ENCODE measurements at regions of chr10 and their contacts with region 1.

Region 1: DNA sequence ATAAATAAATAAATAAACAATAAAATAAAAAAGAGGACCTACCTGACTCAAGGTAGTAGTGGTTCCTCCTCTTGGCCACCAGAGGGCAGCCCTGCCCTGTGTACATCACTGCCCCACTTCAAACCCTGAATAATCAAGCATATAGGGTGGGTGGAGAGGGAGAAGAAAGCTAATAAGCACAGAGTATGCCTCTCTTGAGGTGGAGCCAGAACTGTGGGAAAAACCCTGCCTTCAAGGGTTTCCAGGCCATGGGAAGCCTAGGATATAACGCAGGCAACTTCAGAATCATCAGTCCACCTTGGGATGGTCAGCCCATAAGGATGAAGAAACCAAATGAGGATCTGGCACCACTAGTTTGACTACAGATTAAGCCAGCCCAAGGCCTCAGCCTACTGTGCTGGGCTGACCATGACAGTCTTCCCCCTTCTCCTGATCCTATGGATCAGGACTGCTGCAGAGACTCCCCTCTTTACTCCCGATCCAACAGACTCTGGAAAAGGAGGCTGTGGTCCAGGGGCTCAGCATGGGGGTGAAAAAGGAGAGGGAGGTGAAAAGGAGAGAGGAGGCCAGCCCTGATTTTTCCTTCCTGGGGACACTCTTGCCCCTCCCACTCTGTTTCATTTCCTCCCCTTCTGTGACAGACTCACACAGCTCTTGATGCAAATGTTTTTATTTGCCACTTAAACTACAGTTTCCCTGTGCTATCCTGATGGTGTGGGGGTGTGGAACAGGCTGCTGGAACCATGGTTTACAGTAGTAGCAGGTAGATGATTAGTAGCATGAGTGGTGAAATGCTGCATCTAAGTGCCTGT is 10.1 kb downstream of the AVPI1 start:
- DNase-seq: no peak
- ATAC-seq: peak; percentile 89
- H3K4me3 Mint-ChIP-seq: no peak overlapping the region
- H3K27ac Mint-ChIP-seq: peak overlapping the region; percentile 50
- H3K4me1 Mint-ChIP-seq: peaks cover 13% of the 10 kb centered on the region
- H3K27me3 Mint-ChIP-seq: no peaks in the 10 kb centered on the region
- CTCF ChIP-seq: peak; percentile 83

Region 2: DNA sequence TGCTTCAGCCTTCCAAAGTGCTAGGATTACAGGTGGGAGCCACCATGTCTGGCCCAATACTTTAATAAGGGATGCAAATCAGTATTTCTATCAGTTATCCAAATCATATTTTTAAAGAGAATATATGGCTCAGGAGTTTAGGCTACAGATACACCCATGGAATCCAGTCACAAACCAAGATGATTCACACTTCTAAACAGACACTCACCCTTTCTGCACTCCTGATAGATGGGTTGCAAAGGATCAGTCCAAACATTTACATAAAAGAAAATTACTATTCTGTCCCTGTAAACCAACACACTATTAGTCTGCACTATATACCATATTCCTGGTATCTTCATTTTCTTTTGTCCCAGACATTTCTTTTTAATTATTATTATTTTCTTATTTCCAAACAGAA is 45.9 kb before region 1 on chr10:
- CTCF ChIA-PET with region 1: no interaction called
- POLR2A ChIA-PET with region 1: no interaction called
- intact Hi-C with region 1: no loop called
- DNase-seq: no peak
- ATAC-seq: no peak
- H3K4me3 Mint-ChIP-seq: no peak overlapping the region
- H3K27ac Mint-ChIP-seq: no peak overlapping the region
- H3K4me1 Mint-ChIP-seq: peaks cover 16% of the 10 kb centered on the region
- H3K27me3 Mint-ChIP-seq: no peaks in the 10 kb centered on the region
- CTCF ChIP-seq: no peak

Region 3: GRCh38 chr10:97659589-97659988 is 17.4 kb before region 1 on chr10:
- CTCF ChIA-PET with region 1: no interaction called
- POLR2A ChIA-PET with region 1: no interaction called
- intact Hi-C with region 1: no loop called
- DNase-seq: no peak
- ATAC-seq: no peak
- H3K4me3 Mint-ChIP-seq: no peak overlapping the region
- H3K27ac Mint-ChIP-seq: no peak overlapping the region
- H3K4me1 Mint-ChIP-seq: no peaks in the 10 kb centered on the region
- H3K27me3 Mint-ChIP-seq: no peaks in the 10 kb centered on the region
- CTCF ChIP-seq: no peak

Region 4: DNA sequence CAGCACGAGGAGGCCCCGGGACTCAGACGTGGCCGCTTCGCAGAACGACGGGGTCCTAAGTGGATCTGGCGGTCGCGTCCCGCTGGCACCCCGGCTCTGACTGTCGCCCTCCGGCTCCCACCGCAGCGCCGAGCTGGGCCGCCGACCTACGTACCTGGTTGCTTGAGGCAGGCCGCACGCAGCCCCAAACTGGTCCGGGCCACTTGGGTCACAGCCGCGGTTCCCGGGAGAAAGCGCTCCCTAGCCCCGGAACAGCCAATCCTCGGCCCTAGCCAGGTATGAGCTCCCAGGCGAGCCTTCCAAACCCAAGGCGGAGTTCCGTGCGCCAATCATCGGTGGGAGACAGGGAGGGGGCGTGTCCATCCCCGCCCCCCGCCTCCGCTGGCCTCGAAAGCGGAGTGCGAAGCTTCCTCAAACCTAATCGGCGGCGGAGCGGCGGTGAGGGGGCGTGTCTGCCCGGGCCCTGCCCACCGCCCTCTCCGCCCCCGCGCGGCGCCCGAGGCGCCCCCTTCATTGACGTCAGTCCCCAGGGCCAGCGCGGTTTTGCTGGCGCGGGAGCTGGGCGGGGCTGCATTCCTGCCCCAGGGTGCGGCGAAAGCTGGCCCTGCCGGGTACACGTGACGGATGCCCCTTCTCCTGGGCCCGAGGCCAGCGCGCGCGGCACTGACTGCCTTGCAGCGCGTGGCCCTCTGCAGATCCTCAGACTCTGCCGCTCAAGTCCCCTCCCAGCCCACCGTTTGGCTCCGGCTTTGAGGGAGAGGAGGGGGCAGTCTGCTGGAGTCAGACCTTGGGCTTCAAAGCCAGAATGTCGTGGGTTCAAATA is 10.2 kb after region 1 on chr10 and contains the start of gene AVPI1:
- CTCF ChIA-PET with region 1: interaction called, 36 read pairs
- POLR2A ChIA-PET with region 1: interaction called, 6 read pairs
- intact Hi-C with region 1: loop called (anchors 1 kb)
- DNase-seq: peak; percentile 97
- ATAC-seq: peak; percentile 96
- H3K4me3 Mint-ChIP-seq: peak within 1 kb of the TSS; percentile 87
- H3K27ac Mint-ChIP-seq: peak within 1 kb of the TSS; percentile 68
- H3K4me1 Mint-ChIP-seq: peaks cover 9% of the 10 kb centered on the region
- H3K27me3 Mint-ChIP-seq: no peaks in the 10 kb centered on the region
- CTCF ChIP-seq: no peak
- total RNA-seq, gene AVPI1: 0.51 and 1.2 TPM in 2 replicates

Region 5: GRCh38 chr10:97714048-97714371 is 37.0 kb after region 1 on chr10:
- CTCF ChIA-PET with region 1: interaction called, 10 read pairs
- POLR2A ChIA-PET with region 1: interaction called, 3 read pairs
- intact Hi-C with region 1: no loop called
- DNase-seq: peak; percentile 47
- ATAC-seq: peak; percentile 84
- H3K4me3 Mint-ChIP-seq: peak overlapping the region; percentile 97
- H3K27ac Mint-ChIP-seq: peak overlapping the region; percentile 73
- H3K4me1 Mint-ChIP-seq: peaks cover 14% of the 10 kb centered on the region
- H3K27me3 Mint-ChIP-seq: peaks cover 22% of the 10 kb centered on the region
- CTCF ChIP-seq: no peak

Region 6: DNA sequence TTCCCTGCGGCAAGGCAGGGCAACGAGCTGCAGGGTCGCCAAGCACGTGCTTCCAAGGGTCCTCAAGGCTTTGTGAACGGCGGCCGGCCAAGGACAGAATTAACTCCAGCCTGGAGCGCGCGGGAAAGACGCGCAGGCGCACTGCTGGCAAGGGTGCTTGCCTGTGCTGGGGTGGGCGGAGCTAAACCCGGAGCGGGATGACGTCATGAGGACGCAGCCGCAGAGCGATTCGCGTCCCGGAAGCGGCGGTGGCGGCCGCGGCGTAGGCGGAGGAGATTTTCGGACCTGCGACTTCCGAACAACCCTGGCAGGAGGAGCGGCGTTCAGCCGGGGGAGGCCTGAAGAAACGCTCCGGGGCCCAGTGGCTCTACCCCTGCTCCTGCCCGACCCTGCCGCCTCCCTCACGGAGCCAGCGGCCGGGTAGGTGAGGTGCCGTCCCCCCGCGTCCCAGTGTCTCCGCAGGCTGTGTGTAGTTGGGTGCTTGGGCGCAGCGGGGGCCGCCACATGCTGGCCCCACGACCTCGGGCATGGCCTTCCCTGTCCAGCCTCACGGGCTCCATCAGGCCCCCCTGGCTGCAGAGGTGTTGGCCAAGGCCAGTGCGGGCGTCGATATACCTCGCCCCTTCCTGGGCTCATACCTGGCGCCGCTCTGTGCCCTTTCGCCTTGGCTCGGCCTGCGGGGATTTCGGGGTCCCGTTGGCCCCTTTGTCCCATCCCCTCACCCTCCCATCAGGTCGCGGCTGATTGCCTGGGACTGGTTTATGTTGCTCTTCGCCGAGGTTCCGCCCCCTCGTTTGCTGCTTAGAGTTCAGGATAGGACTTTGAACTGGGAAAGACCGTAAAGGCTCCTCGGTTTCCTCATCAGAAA is 60.2 kb after region 1 on chr10 and contains the start of gene ZFYVE27:
- CTCF ChIA-PET with region 1: interaction called, 86 read pairs
- POLR2A ChIA-PET with region 1: interaction called, 3 read pairs
- intact Hi-C with region 1: loop called (anchors 1 kb)
- DNase-seq: peak; percentile 94
- ATAC-seq: peak; percentile 90
- H3K4me3 Mint-ChIP-seq: peak within 1 kb of the TSS; percentile 97
- H3K27ac Mint-ChIP-seq: peak within 1 kb of the TSS; percentile 97
- H3K4me1 Mint-ChIP-seq: peaks cover 47% of the 10 kb centered on the region
- H3K27me3 Mint-ChIP-seq: no peaks in the 10 kb centered on the region
- CTCF ChIP-seq: no peak
- total RNA-seq, gene ZFYVE27: 45.3 and 65.7 TPM in 2 replicates